GM18951 (cell line): ENCODE measurements at regions of chr2 and their contacts with region 1.

Region 1: GRCh38 chr2:102020596-102021181 is 28.9 kb downstream of the IL1R2 start:
- POLR2A ChIP-seq: no peak

Region 2: DNA sequence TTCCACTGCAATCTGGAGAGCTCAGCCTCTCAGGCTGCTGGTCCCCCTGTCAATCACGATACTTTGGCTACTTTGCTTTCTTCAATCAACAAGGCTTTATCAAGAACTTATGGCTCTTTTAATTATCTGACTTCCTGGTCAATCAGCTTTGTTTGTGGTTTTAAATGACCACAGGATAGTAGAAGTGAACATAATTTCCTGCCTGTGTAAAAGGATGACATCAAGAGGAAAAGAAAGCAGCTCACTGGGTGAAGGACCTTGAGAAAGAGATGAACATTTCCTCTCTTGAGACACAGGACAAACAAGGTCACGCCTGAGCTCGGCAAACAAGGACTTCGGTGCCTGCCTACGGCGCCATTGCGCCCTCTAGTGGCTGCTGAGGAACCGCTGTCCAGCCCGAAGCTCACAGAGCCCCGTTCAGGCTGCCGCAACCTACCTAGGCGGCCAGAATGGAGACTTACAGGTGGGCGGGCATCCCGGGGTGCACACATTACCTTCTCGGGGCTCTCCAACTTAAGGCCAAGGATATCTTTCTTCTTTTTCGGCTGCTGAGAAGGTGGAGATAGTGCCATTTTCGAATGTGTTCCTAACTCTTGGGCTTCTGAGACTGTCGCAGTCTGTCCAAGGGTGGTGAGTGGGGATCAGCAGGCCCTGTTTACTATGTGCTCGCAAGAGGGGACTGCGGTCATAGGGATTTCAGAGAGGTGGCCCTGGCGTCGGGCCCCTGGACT is 220.1 kb after region 1 on chr2:
- in situ Hi-C with region 1: loop called (anchors 5 kb)
- POLR2A ChIP-seq: no peak